ENCODE measurements at regions of chr1 and their contacts with region 1.

Region 1: GRCh38 chr1:67618285-67619018 is 66.5 kb upstream of the GADD45A start:
- DNase-seq: peak in 3 of 4 donors; percentile 54 to 69 (median 58)
- ATAC-seq: peak; percentile 90
- H3K4me3 ChIP-seq: no peak overlapping the region
- H3K27ac ChIP-seq: peak overlapping the region; percentile 41 to 76
- H3K4me1 ChIP-seq: peaks cover 0 to 11% of the 10 kb centered on the region in 2 donors
- H3K27me3 ChIP-seq: no peaks in the 10 kb centered on the region
- CTCF ChIP-seq: no peak

Region 2: DNA sequence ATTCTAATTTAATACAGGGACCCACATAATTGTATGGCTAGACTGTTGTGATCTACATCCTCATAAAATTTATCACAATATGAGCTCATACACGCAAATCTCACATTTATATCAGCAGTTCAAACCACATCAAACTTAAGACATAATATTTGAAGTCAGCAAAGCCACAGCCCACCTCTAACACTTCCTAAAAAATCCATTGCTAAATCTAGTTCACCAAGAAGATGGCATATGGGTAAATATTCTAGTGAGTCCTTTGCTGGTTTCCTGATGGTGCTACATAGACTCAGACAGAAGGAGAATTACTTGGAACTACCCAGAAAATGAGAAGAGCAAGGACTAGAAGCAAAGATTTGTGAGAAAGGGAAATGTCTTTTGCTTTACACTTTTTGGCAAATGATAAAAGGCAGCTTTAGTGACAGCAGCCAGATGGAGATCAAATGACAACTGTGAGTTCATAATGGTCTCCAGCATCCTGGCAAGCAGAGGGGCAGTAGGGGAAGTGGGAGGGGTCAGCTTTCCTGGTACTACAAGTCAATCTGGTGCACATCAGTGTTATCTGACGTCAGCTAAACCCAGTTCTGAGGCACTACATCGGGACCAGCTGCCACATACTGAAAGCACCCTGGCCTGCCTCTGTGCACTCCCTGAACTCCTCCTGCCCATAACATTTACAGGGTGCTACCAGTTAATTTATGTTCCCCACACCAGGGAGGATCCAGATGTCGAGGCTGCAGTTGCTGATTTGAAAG is 56.0 kb after region 1 on chr1:
- intact Hi-C with region 1: loop called in 1 of 2 experiments (anchors 10 kb)
- DNase-seq: peak in 3 of 4 donors; percentile 34 to 91 (median 80)
- ATAC-seq: peak; percentile 70
- H3K4me3 ChIP-seq: no peak overlapping the region
- H3K27ac ChIP-seq: peak overlapping the region; percentile 16 to 57
- H3K4me1 ChIP-seq: peaks cover 5 to 8% of the 10 kb centered on the region in 2 donors
- H3K27me3 ChIP-seq: no peaks in the 10 kb centered on the region
- CTCF ChIP-seq: no peak